Dorsolateral prefrontal cortex (tissue), 120 donors: ENCODE measurements at regions of chr10 and their contacts with region 1.

Region 1: GRCh38 chr10:98391578-98391991 is 23.4 kb downstream of the PYROXD2 start:
- DNase-seq: peak in 4 of 10 donors; percentile 27 to 86 (median 46)
- H3K4me3 ChIP-seq: no peak overlapping the region
- H3K27ac ChIP-seq: no peak overlapping the region
- H3K27me3 ChIP-seq: no peaks in the 10 kb centered on the region
- CTCF ChIP-seq: no peak

Region 2: GRCh38 chr10:98170249-98171117 is 221.1 kb before region 1 on chr10:
- intact Hi-C with region 1: loop called in 1 of 2 experiments (anchors 10 kb)
- DNase-seq: peak in 3 of 10 donors; percentile 29 to 53 (median 31)
- H3K4me3 ChIP-seq: no peak overlapping the region
- H3K27ac ChIP-seq: no peak overlapping the region
- H3K27me3 ChIP-seq: no peaks in the 10 kb centered on the region
- CTCF ChIP-seq: peak; percentile 58 to 87 (median 80)

Region 3: GRCh38 chr10:98254234-98254974 is 137.2 kb before region 1 on chr10:
- intact Hi-C with region 1: loop called in 1 of 2 experiments (anchors 5 kb)
- DNase-seq: no peak
- H3K4me3 ChIP-seq: no peak overlapping the region
- H3K27ac ChIP-seq: peak overlapping the region in 1 of 59 donors; percentile 14
- H3K27me3 ChIP-seq: no peaks in the 10 kb centered on the region
- CTCF ChIP-seq: no peak

Region 4: GRCh38 chr10:98262571-98262970 is 129.0 kb before region 1 on chr10:
- intact Hi-C with region 1: loop called in 1 of 2 experiments (anchors 10 kb)
- DNase-seq: no peak
- H3K4me3 ChIP-seq: no peak overlapping the region
- H3K27ac ChIP-seq: no peak overlapping the region
- H3K27me3 ChIP-seq: peaks cover 0 to 4% (median 0%) of the 10 kb centered on the region in 45 donors
- CTCF ChIP-seq: peak in 36 of 56 donors; percentile 8 to 50 (median 26)

Region 5: DNA sequence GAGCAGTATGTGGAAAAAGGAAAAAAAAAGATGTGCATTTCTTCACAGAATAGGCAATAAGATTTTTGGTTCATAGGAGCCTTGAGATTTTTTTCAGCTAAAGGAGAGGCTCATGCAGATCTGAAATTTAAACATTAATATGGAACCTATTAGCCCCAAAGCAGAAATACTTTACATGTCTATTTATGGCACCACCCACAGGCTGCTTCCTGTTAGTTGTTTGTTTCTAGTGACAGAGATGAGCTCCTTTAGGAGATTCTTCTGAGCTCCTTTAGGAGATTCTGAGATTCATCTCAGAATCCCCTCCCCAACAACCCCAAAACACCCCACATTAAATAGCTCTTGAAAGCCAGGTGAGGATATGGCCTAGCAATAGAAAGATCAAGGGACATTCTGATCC is 83.0 kb after region 1 on chr10:
- intact Hi-C with region 1: no loop called
- DNase-seq: no peak
- H3K4me3 ChIP-seq: no peak overlapping the region
- H3K27ac ChIP-seq: no peak overlapping the region
- H3K27me3 ChIP-seq: no peaks in the 10 kb centered on the region
- CTCF ChIP-seq: no peak